Endothelial cell of umbilical vein (primary cell): ENCODE measurements at regions of chr4 and their contacts with region 1.

Region 1: DNA sequence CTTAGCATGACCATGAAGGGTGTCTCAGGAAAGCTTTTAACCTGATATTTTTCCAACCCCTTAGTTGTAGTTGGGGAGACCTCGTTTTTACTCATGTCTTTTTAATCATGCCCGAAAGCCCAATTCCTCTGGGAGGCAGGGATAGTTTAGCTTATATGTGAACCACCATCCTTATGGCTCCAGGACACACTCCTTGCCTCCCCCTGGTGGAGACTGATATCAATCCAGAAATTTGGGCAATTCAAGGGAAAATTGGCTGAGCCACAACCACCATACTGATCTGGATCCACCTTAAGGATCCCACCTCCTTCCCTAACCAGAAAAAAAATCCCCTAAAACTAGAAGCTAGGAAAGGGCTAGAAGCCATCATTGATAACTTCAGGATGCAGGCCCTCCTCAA is 13.4 kb upstream of the COL25A1 start:
- DNase-seq: peak; percentile 13
- H3K4me3 ChIP-seq: no peak overlapping the region
- H3K27ac ChIP-seq: no peak overlapping the region
- H3K4me1 ChIP-seq: no peaks in the 10 kb centered on the region
- H3K27me3 ChIP-seq: peaks cover 0 to 2% of the 10 kb centered on the region in 2 experiments
- CTCF ChIP-seq: peak; percentile 27 to 37
- POLR2A ChIP-seq: no peak

Region 2: GRCh38 chr4:109327641-109328040 is 11.8 kb after region 1 on chr4:
- CTCF ChIA-PET with region 1: interaction called, 12 read pairs
- POLR2A ChIA-PET with region 1: no interaction called
- dilution Hi-C with region 1: no loop called
- intact Hi-C with region 1: no loop called
- DNase-seq: no peak
- H3K4me3 ChIP-seq: no peak overlapping the region
- H3K27ac ChIP-seq: no peak overlapping the region
- H3K4me1 ChIP-seq: no peaks in the 10 kb centered on the region
- H3K27me3 ChIP-seq: no peaks in the 10 kb centered on the region
- CTCF ChIP-seq: no peak
- POLR2A ChIP-seq: no peak

Region 3: GRCh38 chr4:109406338-109406931 is 90.6 kb after region 1 on chr4:
- CTCF ChIA-PET with region 1: interaction called, 10 read pairs
- POLR2A ChIA-PET with region 1: no interaction called
- dilution Hi-C with region 1: no loop called
- intact Hi-C with region 1: no loop called
- DNase-seq: peak; percentile 75
- H3K4me3 ChIP-seq: no peak overlapping the region
- H3K27ac ChIP-seq: no peak overlapping the region
- H3K4me1 ChIP-seq: no peaks in the 10 kb centered on the region
- H3K27me3 ChIP-seq: no peaks in the 10 kb centered on the region
- CTCF ChIP-seq: peak; percentile 51 to 53
- POLR2A ChIP-seq: no peak

Region 4: GRCh38 chr4:109559983-109560686 is 244.3 kb after region 1 on chr4 and contains the start of gene MCUB:
- CTCF ChIA-PET with region 1: no interaction called
- POLR2A ChIA-PET with region 1: no interaction called
- dilution Hi-C with region 1: no loop called
- intact Hi-C with region 1: no loop called
- DNase-seq: peak; percentile 85
- H3K4me3 ChIP-seq: peak within 1 kb of the TSS; percentile 73 to 93 (median 90)
- H3K27ac ChIP-seq: peak within 1 kb of the TSS; percentile 94
- H3K4me1 ChIP-seq: peaks cover 16% of the 10 kb centered on the region
- H3K27me3 ChIP-seq: no peaks in the 10 kb centered on the region
- CTCF ChIP-seq: no peak
- POLR2A ChIP-seq: no peak
- total RNA-seq, gene MCUB: 32.5 and 35.2 TPM in 2 replicates